A673 (cell line): ENCODE measurements at regions of chr15 and their contacts with region 1.

Region 1: GRCh38 chr15:43791993-43792760 is at the start of gene SERF2:
- DNase-seq: peak; percentile 100
- H3K4me3 ChIP-seq: peak within 1 kb of the TSS; percentile 79
- H3K27ac ChIP-seq: peak within 1 kb of the TSS; percentile 97
- H3K4me1 ChIP-seq: peaks cover 13% of the 10 kb centered on the region
- H3K27me3 ChIP-seq: no peaks in the 10 kb centered on the region
- CTCF ChIP-seq: no peak
- total RNA-seq, gene SERF2: 632 and 654 TPM in 2 replicates

Region 2: DNA sequence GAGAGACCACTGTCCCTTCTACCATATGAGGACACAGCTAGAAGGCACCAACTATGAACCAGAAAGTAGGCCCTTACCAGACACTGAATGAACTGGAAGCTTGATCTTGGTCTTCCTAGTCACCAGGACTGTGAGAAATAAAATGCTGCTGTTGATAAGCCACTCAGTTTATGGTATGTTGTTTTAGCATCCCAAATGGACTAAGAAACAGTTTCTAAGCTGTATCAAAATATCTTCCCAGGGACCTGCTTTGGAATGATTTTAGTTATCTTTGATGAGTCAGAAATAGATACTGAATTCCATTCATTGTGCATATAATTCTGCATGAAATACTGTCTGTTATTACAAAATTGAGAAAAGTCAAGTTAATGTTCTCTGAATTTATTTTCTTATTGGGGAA is 53.2 kb after region 1 on chr15:
- CTCF ChIA-PET with region 1: no interaction called
- POLR2A ChIA-PET with region 1: interaction called, 17 read pairs
- intact Hi-C with region 1: no loop called
- DNase-seq: no peak
- H3K4me3 ChIP-seq: no peak overlapping the region
- H3K27ac ChIP-seq: no peak overlapping the region
- H3K4me1 ChIP-seq: no peaks in the 10 kb centered on the region
- H3K27me3 ChIP-seq: no peaks in the 10 kb centered on the region
- CTCF ChIP-seq: no peak

Region 3: GRCh38 chr15:45106002-45106790 is 1314.0 kb after region 1 on chr15:
- CTCF ChIA-PET with region 1: no interaction called
- POLR2A ChIA-PET with region 1: interaction called, 10 read pairs
- intact Hi-C with region 1: no loop called
- DNase-seq: no peak
- H3K4me3 ChIP-seq: no peak overlapping the region
- H3K27ac ChIP-seq: no peak overlapping the region
- H3K4me1 ChIP-seq: no peaks in the 10 kb centered on the region
- H3K27me3 ChIP-seq: no peaks in the 10 kb centered on the region
- CTCF ChIP-seq: no peak